Right ventricle myocardium superior (tissue), 1 donor: ENCODE measurements at regions of chr1 and their contacts with region 1.

Region 1: GRCh38 chr1:243343970-243344937 is 88.4 kb downstream of the SDCCAG8 start:
- DNase-seq: no peak
- ATAC-seq: peak; percentile 55

Region 2: DNA sequence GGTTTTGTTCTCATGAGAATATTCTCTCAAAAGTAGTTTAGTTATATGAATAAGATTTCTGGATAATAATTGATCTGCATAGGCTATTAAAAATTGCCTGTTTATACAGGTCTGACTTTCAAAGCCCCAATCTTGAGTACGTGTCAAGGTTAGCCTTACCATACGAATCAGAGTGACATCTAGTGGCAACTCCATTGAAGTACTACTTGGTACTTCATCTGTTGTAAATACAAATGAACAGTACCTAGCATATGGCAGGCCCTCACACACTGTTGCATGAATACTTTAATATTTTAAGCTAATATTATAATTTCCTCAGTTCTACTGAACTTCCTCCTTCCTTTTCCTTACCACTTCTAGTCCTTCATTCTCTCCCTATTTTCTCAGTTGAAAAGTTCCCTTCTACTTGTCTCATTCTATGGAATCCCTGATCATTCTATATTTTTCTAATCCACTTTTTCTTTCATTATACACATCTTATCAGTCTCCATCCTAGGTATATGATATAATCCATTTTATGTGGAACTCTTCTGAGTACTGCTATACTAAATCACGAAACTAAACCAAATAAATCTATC is 404.5 kb after region 1 on chr1:
- intact Hi-C with region 1: loop called (anchors 10 kb)
- DNase-seq: no peak
- ATAC-seq: peak; percentile 97

Region 3: DNA sequence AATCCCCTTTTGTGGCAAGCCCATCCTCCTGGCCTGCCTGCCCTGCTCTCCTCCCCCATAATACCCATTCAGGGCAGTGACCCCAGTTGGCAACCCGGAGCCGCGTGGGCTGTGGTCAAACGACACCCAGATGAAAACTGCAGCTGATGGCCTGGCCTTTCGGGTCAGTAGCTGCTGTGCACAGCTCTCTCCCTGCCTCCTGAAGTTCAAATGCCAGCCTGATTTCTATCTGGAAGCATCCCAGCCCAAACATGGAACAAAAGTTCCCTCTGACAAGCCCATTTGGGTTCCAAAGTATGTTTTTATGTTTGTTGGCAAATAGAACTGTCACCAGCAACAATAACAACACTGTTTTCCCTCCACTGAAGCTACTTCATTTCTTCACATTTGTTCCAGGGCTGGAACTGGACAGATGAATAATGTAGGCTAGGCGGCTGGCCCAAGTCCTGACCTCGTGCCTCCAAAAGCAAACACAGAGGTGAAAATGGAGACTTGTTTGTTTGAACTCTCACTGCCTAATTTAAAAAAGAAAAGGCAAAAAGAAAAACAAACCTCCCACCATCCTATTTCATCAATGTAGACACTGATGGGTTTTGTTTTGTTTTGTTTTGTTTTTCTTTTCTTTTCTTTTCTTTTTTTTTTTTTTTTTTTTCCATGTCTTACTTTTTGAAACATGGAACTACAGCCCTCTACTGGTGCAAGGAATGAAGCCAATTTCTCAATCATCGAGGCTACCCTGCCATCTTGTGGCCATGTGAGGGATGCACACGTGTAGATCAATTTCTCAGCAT is 928.4 kb after region 1 on chr1:
- intact Hi-C with region 1: loop called (anchors 2 kb)
- DNase-seq: peak; percentile 66
- ATAC-seq: peak; percentile 96